ENCODE measurements at regions of chr1 and their contacts with region 1.

Region 1: GRCh38 chr1:9573723-9574122 is 15.0 kb upstream of the TMEM201 start:
- DNase-seq: no peak
- H3K4me3 ChIP-seq: no peak overlapping the region
- H3K27ac ChIP-seq: no peak overlapping the region
- H3K4me1 ChIP-seq: no peaks in the 10 kb centered on the region
- H3K27me3 ChIP-seq: no peaks in the 10 kb centered on the region
- CTCF ChIP-seq: peak; percentile 66

Region 2: DNA sequence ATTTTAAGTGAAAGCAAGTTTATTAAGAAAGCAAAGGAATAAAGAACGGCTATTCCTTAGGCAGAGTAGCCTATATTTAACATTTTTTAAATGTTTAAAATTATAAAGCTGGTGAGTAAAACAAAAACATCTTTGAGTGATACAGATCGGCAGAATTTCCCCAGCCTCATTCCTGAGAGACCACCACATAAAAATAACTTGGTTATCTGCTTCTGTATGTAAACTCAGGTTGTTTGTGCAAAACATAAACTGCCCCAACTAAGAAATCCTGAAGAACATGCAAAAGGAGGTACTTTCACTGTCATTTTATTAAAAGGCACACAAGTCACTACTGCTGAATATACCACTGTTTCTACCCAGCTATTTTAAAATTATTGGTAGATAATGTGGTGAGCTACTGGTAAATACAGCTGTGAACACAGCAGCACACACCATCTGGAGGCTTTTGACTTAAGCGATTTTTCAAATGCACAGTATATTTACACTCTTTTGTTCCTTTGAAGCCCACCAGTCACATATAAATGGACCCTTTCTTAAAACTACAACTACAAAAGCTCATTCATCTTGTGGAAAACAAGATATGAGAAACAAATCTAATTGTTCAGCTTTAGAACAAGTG is 875.6 kb before region 1 on chr1:
- CTCF ChIA-PET with region 1: interaction called, 12 read pairs
- POLR2A ChIA-PET with region 1: no interaction called
- intact Hi-C with region 1: no loop called
- DNase-seq: no peak
- H3K4me3 ChIP-seq: no peak overlapping the region
- H3K27ac ChIP-seq: no peak overlapping the region
- H3K4me1 ChIP-seq: peaks cover 28% of the 10 kb centered on the region
- H3K27me3 ChIP-seq: no peaks in the 10 kb centered on the region
- CTCF ChIP-seq: no peak

Region 3: DNA sequence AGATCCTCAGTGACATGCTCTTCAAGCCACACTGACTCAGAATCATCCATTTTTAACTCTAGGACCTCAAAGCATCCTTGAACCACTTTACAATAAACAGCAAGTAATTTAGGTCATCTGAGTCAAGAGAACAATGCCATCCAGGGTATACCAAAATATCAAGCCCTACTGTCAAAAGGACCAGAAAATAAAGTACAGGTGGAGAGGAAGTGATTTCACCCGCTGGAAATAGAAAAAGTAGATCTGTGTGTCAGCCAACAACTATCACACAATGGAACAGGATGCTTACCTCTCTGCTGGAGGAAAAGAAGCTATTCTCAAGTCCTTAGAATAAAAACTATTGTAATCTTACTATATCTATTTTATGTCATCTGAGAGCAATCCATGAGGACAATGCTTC is 793.3 kb before region 1 on chr1:
- CTCF ChIA-PET with region 1: no interaction called
- POLR2A ChIA-PET with region 1: no interaction called
- intact Hi-C with region 1: no loop called
- DNase-seq: no peak
- H3K4me3 ChIP-seq: no peak overlapping the region
- H3K27ac ChIP-seq: no peak overlapping the region
- H3K4me1 ChIP-seq: no peaks in the 10 kb centered on the region
- H3K27me3 ChIP-seq: no peaks in the 10 kb centered on the region
- CTCF ChIP-seq: no peak

Region 4: DNA sequence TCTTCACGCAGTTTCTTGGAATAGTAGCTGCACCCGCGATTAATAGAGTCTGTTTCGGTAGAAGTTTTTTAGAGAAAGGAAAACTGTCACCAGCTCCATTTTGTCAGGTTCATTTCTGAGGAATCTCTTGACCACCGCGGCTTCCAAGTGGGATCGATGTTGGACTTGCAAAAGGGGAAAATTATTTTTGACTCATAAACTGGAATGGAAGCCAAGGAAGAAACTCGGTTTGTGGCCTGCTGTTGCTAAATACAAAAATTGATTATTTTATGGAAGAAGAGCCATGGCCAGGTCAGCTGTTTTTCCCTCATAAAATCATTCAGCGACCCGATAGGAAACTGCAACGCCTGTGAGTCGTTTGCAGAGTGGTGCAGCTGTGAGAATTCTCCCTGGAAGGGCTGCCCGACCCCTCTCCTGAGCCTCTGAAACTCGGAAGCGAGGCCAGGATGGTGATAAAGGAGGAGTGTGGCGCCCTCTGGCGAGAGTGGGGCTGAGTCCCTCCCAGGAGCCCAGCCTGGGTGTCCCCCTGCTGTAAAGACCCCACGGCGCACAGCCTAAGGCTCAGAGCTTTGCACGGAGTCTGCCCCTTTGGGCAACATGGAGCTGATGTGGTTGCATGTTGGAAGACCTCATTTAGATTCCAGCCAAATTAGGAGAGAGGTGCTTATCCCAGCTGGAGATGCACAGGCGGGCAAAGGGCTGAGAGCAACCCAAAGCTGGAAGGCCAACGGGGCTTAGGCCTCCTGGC is 118.1 kb before region 1 on chr1:
- CTCF ChIA-PET with region 1: interaction called, 14 read pairs
- POLR2A ChIA-PET with region 1: no interaction called
- intact Hi-C with region 1: no loop called
- DNase-seq: peak in 1 of 2 experiments; percentile 34
- H3K4me3 ChIP-seq: no peak overlapping the region
- H3K27ac ChIP-seq: no peak overlapping the region
- H3K4me1 ChIP-seq: no peaks in the 10 kb centered on the region; the same call in 1 of the 2 replicates
- H3K27me3 ChIP-seq: no peaks in the 10 kb centered on the region
- CTCF ChIP-seq: peak; percentile 73

Measured in PC-9 (cell line).